Gastrocnemius medialis (tissue), 4 donors: ENCODE measurements at regions of chr19 and their contacts with region 1.

Region 1: GRCh38 chr19:40750059-40750873 is at the start of gene ACTMAP:
- DNase-seq: peak; percentile 100
- ATAC-seq: peak; percentile 91 to 93
- H3K4me3 ChIP-seq: peak within 1 kb of the TSS; percentile 73 to 93 (median 84)
- H3K27ac ChIP-seq: peak within 1 kb of the TSS; percentile 92 to 98 (median 94)
- H3K4me1 ChIP-seq: peaks cover 35 to 38% of the 10 kb centered on the region in 2 donors
- H3K27me3 ChIP-seq: no peaks in the 10 kb centered on the region
- CTCF ChIP-seq: peak in 2 of 5 experiments; percentile 51 to 67
- POLR2A ChIP-seq: peak; percentile 82 to 92
- total RNA-seq, gene ACTMAP: 4.2 to 14.6 (median 6.2) TPM

Region 2: DNA sequence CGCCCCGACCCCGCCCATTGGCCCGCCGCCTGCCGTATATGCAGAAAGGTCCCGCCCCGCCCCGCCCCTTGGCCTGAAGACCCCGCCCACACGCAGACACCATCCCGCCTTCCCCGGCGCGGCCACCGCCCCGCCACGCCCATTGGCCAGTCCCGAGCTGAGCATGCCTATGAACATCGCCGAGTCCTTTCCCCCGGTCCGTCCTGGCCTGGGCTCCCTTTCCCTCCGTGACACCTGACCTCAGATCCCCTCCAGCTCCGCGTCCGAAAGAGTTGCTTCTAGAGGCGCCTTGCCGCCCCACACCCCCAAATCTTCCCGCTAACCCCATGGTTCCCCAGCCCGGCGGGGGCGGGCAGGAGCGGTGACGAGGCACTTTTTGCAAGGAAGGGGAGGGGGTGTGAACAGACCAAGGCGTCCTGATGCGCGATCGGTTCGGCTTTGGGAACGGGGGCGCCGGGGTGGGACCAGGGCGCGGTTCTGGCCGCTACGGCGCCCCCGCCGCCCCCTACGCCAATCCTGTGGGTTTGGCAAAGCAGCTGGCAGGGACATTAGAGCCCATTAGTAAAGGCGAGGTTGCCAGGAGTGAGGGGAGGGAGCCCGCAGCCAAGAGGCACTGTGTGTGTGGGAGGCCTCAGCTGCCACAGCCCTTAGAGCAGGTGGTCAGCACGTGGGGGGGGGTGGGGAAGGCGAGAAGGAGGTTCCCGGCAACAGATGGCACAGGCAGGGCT is 59.4 kb before region 1 on chr19:
- in situ Hi-C with region 1: no loop called
- intact Hi-C with region 1: loop called (anchors 2 kb)
- DNase-seq: peak; percentile 92 to 94
- ATAC-seq: peak; percentile 87 to 90
- H3K4me3 ChIP-seq: peak overlapping the region; percentile 66 to 92 (median 76)
- H3K27ac ChIP-seq: peak overlapping the region; percentile 90 to 98 (median 96)
- H3K4me1 ChIP-seq: peaks cover 9 to 22% of the 10 kb centered on the region in 2 donors
- H3K27me3 ChIP-seq: no peaks in the 10 kb centered on the region
- CTCF ChIP-seq: no peak
- POLR2A ChIP-seq: peak; percentile 49 to 53

Region 3: DNA sequence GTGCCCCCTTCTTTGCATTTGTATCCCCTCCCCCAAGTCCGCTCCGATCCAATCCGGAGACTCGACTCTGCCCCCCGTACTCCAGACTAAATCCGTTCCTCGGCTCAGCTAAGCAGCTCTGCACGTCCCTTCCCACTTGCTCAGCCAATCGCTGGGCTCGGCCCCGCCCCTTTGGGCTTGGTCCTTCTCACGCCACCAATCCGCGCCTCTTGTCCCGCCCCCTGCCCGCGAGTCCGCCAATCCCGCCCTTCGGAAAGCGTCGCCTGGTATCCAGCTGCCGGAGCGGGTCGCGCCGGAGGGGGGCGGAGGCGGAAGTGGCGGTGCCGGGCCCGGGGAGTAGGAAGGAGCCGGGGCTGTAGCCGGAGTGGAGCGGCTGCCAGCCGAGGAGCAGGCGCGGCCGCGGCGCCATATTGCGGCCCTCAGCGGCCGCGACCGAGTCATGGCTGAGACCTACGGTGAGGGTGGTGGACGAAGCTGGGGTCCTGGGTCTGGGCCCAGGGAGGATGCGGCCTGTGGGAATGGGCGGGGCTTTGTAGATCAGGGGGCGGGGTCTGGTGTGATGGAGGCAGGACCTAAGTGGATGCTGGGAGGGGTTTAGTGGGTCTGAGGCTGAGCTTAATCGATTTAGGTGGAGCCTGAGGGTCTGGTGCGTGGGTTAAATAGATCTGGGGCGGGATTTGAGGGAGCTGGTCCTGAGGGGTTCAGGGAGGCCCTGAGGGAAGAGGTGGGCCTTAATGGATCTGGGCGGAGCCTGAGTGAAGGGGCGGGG is 27.9 kb after region 1 on chr19 and contains the start of gene RAB4B:
- in situ Hi-C with region 1: no loop called
- intact Hi-C with region 1: loop called (anchors 1 kb)
- DNase-seq: peak; percentile 100
- ATAC-seq: peak; percentile 92
- H3K4me3 ChIP-seq: peak within 1 kb of the TSS; percentile 79 to 93 (median 89)
- H3K27ac ChIP-seq: peak within 1 kb of the TSS; percentile 93 to 99 (median 98)
- H3K4me1 ChIP-seq: peaks cover 7 to 14% of the 10 kb centered on the region in 2 donors
- H3K27me3 ChIP-seq: no peaks in the 10 kb centered on the region
- CTCF ChIP-seq: peak in 2 of 5 experiments; percentile 25 to 27
- POLR2A ChIP-seq: peak; percentile 76 to 81
- total RNA-seq, gene RAB4B: 14.9 to 27.2 (median 19.7) TPM

Region 4: DNA sequence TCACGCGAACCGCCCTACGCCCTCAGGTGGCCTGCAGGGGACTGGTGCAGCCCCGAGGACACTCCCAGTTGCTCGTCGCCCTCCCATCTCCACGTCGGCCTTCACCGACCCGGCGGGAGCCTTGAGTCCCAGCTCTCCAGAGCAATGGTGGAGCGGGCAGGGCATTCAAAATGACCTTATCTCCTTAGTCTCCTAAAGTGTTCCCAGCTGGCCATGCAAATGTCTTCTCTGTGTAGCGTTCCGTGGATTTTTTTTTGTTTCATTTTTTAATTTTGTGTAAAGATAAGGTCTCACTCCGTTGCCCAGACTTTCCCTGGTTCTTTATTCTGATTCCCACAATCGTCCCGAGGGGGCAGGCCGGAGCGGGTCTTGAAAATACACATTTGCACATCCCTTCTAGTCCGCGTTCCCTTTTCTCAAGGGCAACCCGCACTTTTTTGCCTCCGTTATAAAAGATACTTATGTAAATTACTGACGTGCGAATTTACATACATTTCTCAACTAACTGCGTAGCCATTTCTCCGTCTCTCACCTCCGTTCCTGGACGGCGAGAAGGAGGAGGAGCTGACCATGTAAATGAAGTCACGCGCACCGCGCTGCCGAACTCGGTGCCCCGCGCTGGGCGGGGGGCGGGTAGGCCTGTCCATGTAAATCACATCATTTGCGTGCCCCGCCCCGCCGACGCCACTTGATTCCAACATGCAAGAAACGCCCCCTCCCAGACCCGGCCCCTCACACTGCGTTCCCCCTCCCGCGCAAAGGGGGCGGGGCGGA is 48.1 kb after region 1 on chr19:
- in situ Hi-C with region 1: no loop called
- intact Hi-C with region 1: loop called (anchors 1 kb)
- DNase-seq: peak; percentile 100
- ATAC-seq: peak; percentile 17 to 83
- H3K4me3 ChIP-seq: peak overlapping the region; percentile 55 to 96 (median 63)
- H3K27ac ChIP-seq: peak overlapping the region; percentile 94 to 96 (median 96)
- H3K4me1 ChIP-seq: peaks cover 36 to 42% of the 10 kb centered on the region in 2 donors
- H3K27me3 ChIP-seq: no peaks in the 10 kb centered on the region
- CTCF ChIP-seq: peak; percentile 34 to 51 (median 49)
- POLR2A ChIP-seq: no peak

Region 5: GRCh38 chr19:40806488-40807468 is 56.5 kb after region 1 on chr19:
- in situ Hi-C with region 1: loop called in 1 of 4 experiments (anchors 10 kb)
- intact Hi-C with region 1: loop called (anchors 2 kb)
- DNase-seq: peak; percentile 61 to 69
- ATAC-seq: peak; percentile 19 to 32
- H3K4me3 ChIP-seq: peak overlapping the region; percentile 6 to 28 (median 14)
- H3K27ac ChIP-seq: peak overlapping the region; percentile 94 to 96 (median 96)
- H3K4me1 ChIP-seq: peaks cover 66 to 72% of the 10 kb centered on the region in 2 donors
- H3K27me3 ChIP-seq: no peaks in the 10 kb centered on the region
- CTCF ChIP-seq: peak; percentile 41 to 76 (median 75)
- POLR2A ChIP-seq: no peak